ENCODE measurements at regions of chr4 and their contacts with region 1.

Region 1: DNA sequence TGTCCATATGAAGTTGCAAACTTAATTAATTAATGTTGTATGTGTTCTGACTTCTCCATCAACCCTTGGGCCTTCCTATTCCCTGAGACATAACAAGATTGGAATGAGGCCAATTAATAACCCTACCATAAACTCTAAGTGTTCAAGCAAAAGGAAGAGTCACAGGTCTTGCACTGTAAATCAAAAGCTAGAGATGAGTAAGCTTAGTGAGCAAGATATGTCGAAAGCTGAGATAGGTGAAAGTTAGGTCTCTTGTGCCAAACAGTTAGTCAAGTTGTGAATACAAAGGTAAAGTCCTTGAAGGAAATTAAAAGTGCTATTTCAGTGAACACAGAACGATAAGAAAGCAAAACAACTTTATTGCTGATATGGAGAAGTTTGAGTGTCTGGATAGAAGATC is 58.2 kb upstream of the GPRIN3 start:
- DNase-seq: no peak
- H3K4me3 Mint-ChIP-seq: no peak overlapping the region
- H3K27ac Mint-ChIP-seq: no peak overlapping the region
- H3K4me1 Mint-ChIP-seq: peaks cover 13% of the 10 kb centered on the region
- H3K27me3 Mint-ChIP-seq: no peaks in the 10 kb centered on the region

Region 2: DNA sequence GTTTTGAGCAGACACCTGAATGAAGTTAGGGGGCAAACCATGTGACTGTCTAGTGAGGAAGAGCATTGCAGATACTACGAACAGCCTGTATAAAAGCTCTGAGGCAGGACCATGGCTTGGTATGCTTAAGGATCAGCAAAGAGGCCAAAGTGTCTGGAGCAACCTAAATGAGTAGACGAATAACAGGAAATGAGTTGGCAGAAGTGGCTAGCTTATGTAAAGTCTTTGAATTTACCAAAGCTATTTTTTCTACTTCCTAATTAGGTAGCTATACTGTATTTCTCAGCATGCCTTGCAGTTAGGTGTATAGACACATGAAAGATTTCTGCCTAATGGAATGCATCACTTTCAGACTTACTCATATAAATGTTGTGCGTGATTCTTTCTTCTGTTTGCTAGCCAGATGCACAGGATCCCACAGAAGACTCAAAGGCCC is 48.8 kb before region 1 on chr4:
- CTCF ChIA-PET with region 1: no interaction called
- intact Hi-C with region 1: loop called (anchors 1 kb)
- DNase-seq: peak; percentile 31
- H3K4me3 Mint-ChIP-seq: peak overlapping the region; percentile 25
- H3K27ac Mint-ChIP-seq: peak overlapping the region; percentile 74
- H3K4me1 Mint-ChIP-seq: peaks cover 37% of the 10 kb centered on the region
- H3K27me3 Mint-ChIP-seq: no peaks in the 10 kb centered on the region

Measured in activated naive CD4-positive, alpha-beta T cell treated with anti-CD3 and anti-CD28 coated beads for 36 hours (primary cell).